ENCODE measurements at regions of chr16 and their contacts with region 1.

Region 1: GRCh38 chr16:87387942-87388817 is 4.0 kb upstream of the MAP1LC3B start:
- DNase-seq: peak; percentile 98 to 99
- ATAC-seq: peak; percentile 74 to 78
- H3K4me3 ChIP-seq: peak overlapping the region; percentile 1 to 32 (median 18)
- H3K27ac ChIP-seq: peak overlapping the region; percentile 93 to 99 (median 98)
- H3K4me1 ChIP-seq: peaks cover 26 to 28% of the 10 kb centered on the region in 2 donors
- H3K27me3 ChIP-seq: no peaks in the 10 kb centered on the region
- CTCF ChIP-seq: no peak
- POLR2A ChIP-seq: peak; percentile 40 to 86

Region 2: GRCh38 chr16:85821441-85822135 is 1566.6 kb before region 1 on chr16:
- in situ Hi-C with region 1: no loop called
- intact Hi-C with region 1: no loop called
- DNase-seq: peak; percentile 26 to 39
- ATAC-seq: peak; percentile 52 to 56
- H3K4me3 ChIP-seq: no peak overlapping the region
- H3K27ac ChIP-seq: no peak overlapping the region
- H3K4me1 ChIP-seq: no peaks in the 10 kb centered on the region
- H3K27me3 ChIP-seq: peaks cover 0 to 18% (median 6%) of the 10 kb centered on the region in 3 donors
- CTCF ChIP-seq: peak; percentile 77 to 96 (median 89)
- POLR2A ChIP-seq: no peak

Region 3: DNA sequence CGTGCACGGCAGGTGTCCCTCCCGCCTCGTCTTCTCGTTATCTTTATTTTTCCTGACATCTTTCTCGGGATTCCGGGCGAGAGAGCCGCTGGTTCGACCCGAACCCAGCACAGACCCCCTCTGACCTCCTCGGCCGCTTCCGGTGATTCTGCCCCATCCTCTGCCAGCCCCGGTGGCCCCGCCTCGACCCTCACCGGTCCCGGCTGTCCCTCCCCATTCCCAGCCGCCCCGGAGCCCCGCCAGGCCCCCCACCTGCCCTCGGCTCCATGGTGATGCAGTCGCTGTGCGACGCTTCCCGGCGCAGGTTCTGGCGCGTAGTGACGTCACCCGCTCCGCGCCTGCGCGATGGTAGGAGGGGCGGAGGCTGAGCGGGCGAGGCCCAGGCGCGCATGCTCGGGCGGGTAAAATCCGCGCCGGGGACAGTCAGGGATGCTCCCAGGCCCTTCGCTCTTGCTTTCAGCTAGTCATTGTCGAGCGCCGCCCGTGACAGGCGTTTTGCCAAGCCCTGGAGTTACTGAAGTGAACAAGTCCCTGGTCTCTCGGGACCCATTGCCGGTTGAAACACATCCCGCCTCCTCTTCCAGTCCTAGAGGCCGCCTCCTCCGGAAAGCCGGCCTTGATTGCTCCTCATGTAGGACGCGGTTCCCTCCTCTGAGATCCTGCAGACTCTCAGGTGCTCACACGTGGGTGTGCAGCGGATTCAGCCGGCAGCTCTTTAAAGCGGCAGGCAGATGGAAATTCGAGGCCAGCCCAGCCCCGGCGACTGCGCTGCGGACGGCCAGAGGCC is 833.1 kb before region 1 on chr16 and contains the start of gene MTHFSD:
- in situ Hi-C with region 1: loop called in 1 of 4 experiments (anchors 25 kb)
- intact Hi-C with region 1: no loop called
- DNase-seq: peak; percentile 85 to 90
- ATAC-seq: peak; percentile 50 to 70
- H3K4me3 ChIP-seq: peak within 1 kb of the TSS; percentile 78 to 95 (median 84)
- H3K27ac ChIP-seq: peak within 1 kb of the TSS; percentile 92 to 94 (median 93)
- H3K4me1 ChIP-seq: peaks cover 23 to 34% of the 10 kb centered on the region in 2 donors
- H3K27me3 ChIP-seq: no peaks in the 10 kb centered on the region
- CTCF ChIP-seq: no peak
- POLR2A ChIP-seq: peak; percentile 73 to 86
- total RNA-seq, gene MTHFSD: 10.9 to 31.2 (median 16.0) TPM

Region 4: GRCh38 chr16:86664533-86665318 is 723.5 kb before region 1 on chr16:
- in situ Hi-C with region 1: no loop called
- intact Hi-C with region 1: loop called (anchors 10 kb)
- DNase-seq: peak; percentile 56 to 73
- ATAC-seq: peak; percentile 34 to 37
- H3K4me3 ChIP-seq: peak overlapping the region in 2 of 4 donors; percentile 29 to 37
- H3K27ac ChIP-seq: peak overlapping the region; percentile 82 to 96 (median 90)
- H3K4me1 ChIP-seq: peaks cover 55 to 93% of the 10 kb centered on the region in 2 donors
- H3K27me3 ChIP-seq: no peaks in the 10 kb centered on the region
- CTCF ChIP-seq: no peak
- POLR2A ChIP-seq: peak in 1 of 2 donors; percentile 26

Region 5: GRCh38 chr16:87316923-87317749 is 71.0 kb before region 1 on chr16 and contains the start of gene C16orf95:
- in situ Hi-C with region 1: loop called (anchors 5 to 10 kb)
- intact Hi-C with region 1: no loop called
- DNase-seq: peak; percentile 96
- ATAC-seq: peak; percentile 95
- H3K4me3 ChIP-seq: peak within 1 kb of the TSS; percentile 83 to 100 (median 95)
- H3K27ac ChIP-seq: peak within 1 kb of the TSS; percentile 89 to 99 (median 93)
- H3K4me1 ChIP-seq: peaks cover 14 to 15% of the 10 kb centered on the region in 2 donors
- H3K27me3 ChIP-seq: no peaks in the 10 kb centered on the region
- CTCF ChIP-seq: peak; percentile 60 to 79 (median 77)
- POLR2A ChIP-seq: peak; percentile 93 to 95
- total RNA-seq, gene C16orf95: 0.22 to 3.8 (median 1.3) TPM

Region 6: GRCh38 chr16:87461466-87461991 is 73.3 kb after region 1 on chr16:
- in situ Hi-C with region 1: no loop called
- intact Hi-C with region 1: loop called (anchors 2 kb)
- DNase-seq: peak; percentile 26 to 44
- ATAC-seq: peak in 1 of 2 donors; percentile 19
- H3K4me3 ChIP-seq: no peak overlapping the region
- H3K27ac ChIP-seq: peak overlapping the region; percentile 4 to 58 (median 48)
- H3K4me1 ChIP-seq: peaks cover 47 to 64% of the 10 kb centered on the region in 2 donors
- H3K27me3 ChIP-seq: no peaks in the 10 kb centered on the region
- CTCF ChIP-seq: peak in 3 of 5 experiments; percentile 20 to 36 (median 33)
- POLR2A ChIP-seq: no peak

Region 7: GRCh38 chr16:87492721-87493607 is 104.8 kb after region 1 on chr16 and contains the start of gene ZCCHC14:
- in situ Hi-C with region 1: no loop called
- intact Hi-C with region 1: loop called (anchors 1 kb)
- DNase-seq: peak; percentile 99
- ATAC-seq: peak; percentile 88 to 92
- H3K4me3 ChIP-seq: peak within 1 kb of the TSS; percentile 53 to 66 (median 60)
- H3K27ac ChIP-seq: peak within 1 kb of the TSS; percentile 67 to 75 (median 72)
- H3K4me1 ChIP-seq: peaks cover 41 to 42% of the 10 kb centered on the region in 2 donors
- H3K27me3 ChIP-seq: no peaks in the 10 kb centered on the region
- CTCF ChIP-seq: peak in 2 of 5 experiments; percentile 6 to 35
- POLR2A ChIP-seq: peak; percentile 89 to 93
- total RNA-seq, gene ZCCHC14: 8.9 to 10.7 (median 9.3) TPM

Region 8: GRCh38 chr16:87765776-87766484 is 377.8 kb after region 1 on chr16 and contains the start of gene KLHDC4:
- in situ Hi-C with region 1: loop called in 1 of 4 experiments (anchors 25 kb)
- intact Hi-C with region 1: no loop called
- DNase-seq: peak; percentile 83 to 86
- ATAC-seq: peak; percentile 95
- H3K4me3 ChIP-seq: peak within 1 kb of the TSS; percentile 86 to 98 (median 94)
- H3K27ac ChIP-seq: peak within 1 kb of the TSS; percentile 88 to 95 (median 90)
- H3K4me1 ChIP-seq: peaks cover 5 to 8% of the 10 kb centered on the region in 2 donors
- H3K27me3 ChIP-seq: no peaks in the 10 kb centered on the region
- CTCF ChIP-seq: no peak
- POLR2A ChIP-seq: peak; percentile 68 to 85
- total RNA-seq, gene KLHDC4: 8.2 to 12.7 (median 10.4) TPM